Activated naive CD4-positive, alpha-beta T cell treated with anti-CD3 and anti-CD28 coated beads for 36 hours (primary cell): ENCODE measurements at regions of chr19 and their contacts with region 1.

Region 1: GRCh38 chr19:41691268-41691970 is 3.3 kb upstream of the CEACAM7 start:
- DNase-seq: peak; percentile 50
- H3K4me3 Mint-ChIP-seq: no peak overlapping the region
- H3K27ac Mint-ChIP-seq: no peak overlapping the region
- H3K4me1 Mint-ChIP-seq: no peaks in the 10 kb centered on the region
- H3K27me3 Mint-ChIP-seq: peaks cover 25% of the 10 kb centered on the region

Region 2: GRCh38 chr19:41701401-41702075 is 10.1 kb after region 1 on chr19:
- CTCF ChIA-PET with region 1: interaction called, 13 read pairs
- intact Hi-C with region 1: no loop called
- DNase-seq: peak; percentile 23
- H3K4me3 Mint-ChIP-seq: no peak overlapping the region
- H3K27ac Mint-ChIP-seq: no peak overlapping the region
- H3K4me1 Mint-ChIP-seq: no peaks in the 10 kb centered on the region
- H3K27me3 Mint-ChIP-seq: peaks cover 18% of the 10 kb centered on the region